Activated CD4-positive, alpha-beta memory T cell treated with anti-CD3 and anti-CD28 coated beads for 36 hours (primary cell): ENCODE measurements at regions of chr16 and their contacts with region 1.

Region 1: GRCh38 chr16:48623304-48624016 is 13.5 kb upstream of the N4BP1 start:
- DNase-seq: peak; percentile 89
- H3K4me3 Mint-ChIP-seq: peak overlapping the region; percentile 71
- H3K27ac Mint-ChIP-seq: peak overlapping the region; percentile 45
- H3K4me1 Mint-ChIP-seq: peaks cover 15% of the 10 kb centered on the region
- H3K27me3 Mint-ChIP-seq: peaks cover 3% of the 10 kb centered on the region

Region 2: DNA sequence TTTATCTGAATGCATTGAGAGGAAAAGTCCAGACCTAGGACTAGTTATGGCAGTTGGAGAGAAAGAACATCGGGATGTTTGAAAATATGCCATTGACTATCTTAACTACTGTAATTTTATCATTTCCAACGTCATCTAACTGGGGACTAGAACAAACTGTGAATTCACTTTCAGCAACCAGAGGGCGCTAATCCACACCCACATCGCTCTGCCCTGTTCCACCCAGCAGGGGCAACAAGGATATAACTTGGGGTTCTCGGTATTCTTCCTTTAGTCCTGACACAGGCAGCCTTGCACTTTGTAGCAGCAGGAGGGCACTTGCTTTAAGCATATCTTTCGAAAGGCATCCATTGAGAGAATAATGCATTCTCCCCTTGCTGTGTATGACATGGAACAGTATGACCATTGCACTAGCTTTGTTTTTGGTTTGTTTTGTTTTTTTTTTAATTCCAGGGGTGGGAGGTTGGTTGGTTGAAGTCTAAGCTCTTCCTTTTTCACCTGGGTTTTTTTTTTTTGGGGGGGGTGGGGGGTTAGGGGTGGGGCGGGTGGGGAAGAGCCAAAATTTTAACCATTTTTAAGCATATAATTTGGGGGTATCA is 269.8 kb before region 1 on chr16:
- CTCF ChIA-PET with region 1: interaction called, 121 read pairs
- POLR2A ChIA-PET with region 1: interaction called, 3 read pairs
- intact Hi-C with region 1: loop called (anchors 1 kb)
- DNase-seq: peak; percentile 77
- H3K4me3 Mint-ChIP-seq: no peak overlapping the region
- H3K27ac Mint-ChIP-seq: peak overlapping the region; percentile 43
- H3K4me1 Mint-ChIP-seq: peaks cover 20% of the 10 kb centered on the region
- H3K27me3 Mint-ChIP-seq: no peaks in the 10 kb centered on the region

Region 3: GRCh38 chr16:48452977-48453760 is 170.3 kb before region 1 on chr16:
- CTCF ChIA-PET with region 1: interaction called, 20 read pairs
- POLR2A ChIA-PET with region 1: no interaction called
- intact Hi-C with region 1: no loop called
- DNase-seq: no peak
- H3K4me3 Mint-ChIP-seq: no peak overlapping the region
- H3K27ac Mint-ChIP-seq: no peak overlapping the region
- H3K4me1 Mint-ChIP-seq: peaks cover 7% of the 10 kb centered on the region
- H3K27me3 Mint-ChIP-seq: peaks cover 16% of the 10 kb centered on the region

Region 4: DNA sequence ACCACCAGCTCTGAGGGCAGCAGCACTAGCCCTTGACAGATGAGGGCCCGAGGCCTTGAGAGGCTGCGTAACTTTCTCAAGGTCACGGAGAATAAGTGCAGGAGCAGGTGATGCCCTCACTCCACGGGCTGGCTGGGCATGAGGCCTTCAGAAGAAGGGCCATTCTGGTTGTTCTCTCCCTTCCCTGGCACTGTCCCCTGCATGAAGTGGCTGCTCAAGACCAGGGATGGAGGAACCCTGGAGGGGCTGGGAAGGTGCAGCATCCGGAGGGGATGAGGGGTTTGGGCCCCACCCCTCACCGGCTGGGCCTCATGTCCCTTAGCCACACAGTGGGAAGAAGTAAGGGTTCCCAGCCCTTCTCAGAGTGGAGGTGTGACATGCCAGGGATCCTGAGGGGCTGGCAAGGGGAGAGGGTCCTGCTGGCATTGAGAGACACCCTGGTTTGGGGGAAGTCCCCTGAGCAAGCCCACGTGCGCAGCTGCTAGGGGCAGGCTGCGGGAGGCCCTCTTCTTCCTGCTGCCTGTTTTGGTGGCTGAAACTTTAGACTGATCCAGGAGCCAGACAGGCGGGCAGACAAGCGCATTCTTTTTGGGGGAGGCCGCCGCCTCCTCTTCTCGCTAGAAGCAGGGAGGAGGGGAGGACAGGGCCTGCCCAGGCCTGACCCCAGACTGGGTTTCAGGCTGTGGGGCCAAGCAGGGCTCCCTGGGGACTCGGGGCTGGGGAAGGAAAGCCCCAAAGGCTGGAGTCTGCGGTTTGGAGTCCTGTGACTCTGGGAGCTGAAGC is 87.4 kb before region 1 on chr16:
- CTCF ChIA-PET with region 1: interaction called, 23 read pairs
- POLR2A ChIA-PET with region 1: interaction called, 3 read pairs
- intact Hi-C with region 1: loop called (anchors 2 kb)
- DNase-seq: no peak
- H3K4me3 Mint-ChIP-seq: no peak overlapping the region
- H3K27ac Mint-ChIP-seq: no peak overlapping the region
- H3K4me1 Mint-ChIP-seq: peaks cover 14% of the 10 kb centered on the region
- H3K27me3 Mint-ChIP-seq: no peaks in the 10 kb centered on the region

Region 5: GRCh38 chr16:48576927-48577326 is 46.5 kb before region 1 on chr16:
- CTCF ChIA-PET with region 1: interaction called, 11 read pairs
- POLR2A ChIA-PET with region 1: interaction called, 4 read pairs
- intact Hi-C with region 1: loop called (anchors 1 kb)
- DNase-seq: peak; percentile 55
- H3K4me3 Mint-ChIP-seq: no peak overlapping the region
- H3K27ac Mint-ChIP-seq: peak overlapping the region; percentile 76
- H3K4me1 Mint-ChIP-seq: peaks cover 56% of the 10 kb centered on the region
- H3K27me3 Mint-ChIP-seq: no peaks in the 10 kb centered on the region

Region 6: GRCh38 chr16:48609652-48610029 is 13.8 kb before region 1 on chr16:
- CTCF ChIA-PET with region 1: interaction called, 69 read pairs
- POLR2A ChIA-PET with region 1: interaction called, 9 read pairs
- intact Hi-C with region 1: loop called (anchors 1 kb)
- DNase-seq: no peak
- H3K4me3 Mint-ChIP-seq: no peak overlapping the region
- H3K27ac Mint-ChIP-seq: no peak overlapping the region
- H3K4me1 Mint-ChIP-seq: peaks cover 42% of the 10 kb centered on the region
- H3K27me3 Mint-ChIP-seq: no peaks in the 10 kb centered on the region